ENCODE measurements at regions of chr6 and their contacts with region 1.

Region 1: DNA sequence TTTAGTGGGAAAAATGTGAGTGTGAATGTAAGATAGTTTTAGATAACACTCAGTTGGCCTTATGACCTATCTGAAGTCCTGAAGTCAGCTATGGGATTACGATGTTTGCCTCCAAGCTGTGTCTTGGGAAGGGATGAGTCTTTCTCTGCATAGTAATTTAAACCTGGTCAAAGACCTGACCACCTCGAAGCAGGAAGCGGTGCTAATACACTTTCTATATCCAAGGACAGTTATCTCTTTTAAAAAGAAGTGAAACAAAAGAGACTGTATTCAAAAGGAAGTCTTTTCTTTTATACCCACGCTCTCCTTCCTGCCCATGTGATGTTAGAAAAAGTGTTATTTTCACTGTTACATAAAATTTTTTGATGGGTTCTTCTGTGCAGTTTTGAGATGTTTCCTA is 94.9 kb downstream of the JARID2 start:
- DNase-seq: no peak
- ATAC-seq: no peak
- H3K4me3 Mint-ChIP-seq: peak overlapping the region; percentile 6
- H3K27ac Mint-ChIP-seq: peak overlapping the region; percentile 43
- H3K4me1 Mint-ChIP-seq: peaks cover 87% of the 10 kb centered on the region
- H3K27me3 Mint-ChIP-seq: no peaks in the 10 kb centered on the region
- CTCF ChIP-seq: no peak

Region 2: DNA sequence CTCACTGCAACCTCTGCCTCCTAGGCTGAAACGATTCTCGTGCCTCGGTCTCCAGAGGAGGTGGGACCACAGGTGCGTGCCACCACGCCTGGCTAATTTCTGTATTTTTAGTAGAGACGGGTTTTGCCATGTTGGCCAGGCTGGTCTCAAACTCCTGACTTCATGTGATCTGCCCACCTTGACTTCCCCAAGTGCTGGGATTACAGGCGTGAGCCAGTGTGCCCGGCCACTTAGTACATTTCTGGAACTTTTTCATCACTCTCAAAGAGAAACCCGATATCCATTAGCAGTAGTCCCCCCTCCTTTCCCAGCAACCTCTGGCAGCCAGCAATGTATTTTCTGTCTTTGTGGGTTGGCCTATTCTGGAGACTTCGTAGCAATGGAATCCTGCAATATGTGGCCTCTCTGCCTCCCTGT is 14.9 kb after region 1 on chr6:
- CTCF ChIA-PET with region 1: interaction called, 3 read pairs
- POLR2A ChIA-PET with region 1: interaction called, 5 read pairs
- intact Hi-C with region 1: loop called (anchors 2 kb)
- DNase-seq: no peak
- ATAC-seq: no peak
- H3K4me3 Mint-ChIP-seq: no peak overlapping the region
- H3K27ac Mint-ChIP-seq: no peak overlapping the region
- H3K4me1 Mint-ChIP-seq: peaks cover 79% of the 10 kb centered on the region
- H3K27me3 Mint-ChIP-seq: no peaks in the 10 kb centered on the region
- CTCF ChIP-seq: no peak

Region 3: DNA sequence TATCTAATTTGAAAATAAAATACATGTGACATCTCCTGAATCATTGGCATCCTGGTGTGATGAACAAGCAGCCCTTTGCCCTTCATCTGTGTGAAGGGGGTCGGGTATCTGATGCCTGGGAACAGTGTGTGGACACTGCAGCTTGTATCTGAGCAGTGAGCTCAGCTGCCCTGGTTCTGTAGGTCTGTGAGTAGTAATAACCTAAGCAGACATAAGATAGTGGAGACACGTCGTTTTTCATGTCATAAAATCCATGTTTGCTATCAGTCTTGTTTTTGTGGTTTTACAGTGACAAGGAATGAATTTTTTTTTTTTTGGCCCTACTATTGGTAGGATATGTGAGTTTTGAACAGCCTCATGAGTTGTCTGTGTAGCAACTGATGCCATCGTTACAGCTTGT is 38.1 kb after region 1 on chr6:
- CTCF ChIA-PET with region 1: no interaction called
- POLR2A ChIA-PET with region 1: no interaction called
- intact Hi-C with region 1: loop called (anchors 5 kb)
- DNase-seq: no peak
- ATAC-seq: no peak
- H3K4me3 Mint-ChIP-seq: no peak overlapping the region
- H3K27ac Mint-ChIP-seq: no peak overlapping the region
- H3K4me1 Mint-ChIP-seq: peaks cover 61% of the 10 kb centered on the region
- H3K27me3 Mint-ChIP-seq: no peaks in the 10 kb centered on the region
- CTCF ChIP-seq: no peak

Region 4: GRCh38 chr6:15389765-15390723 is 49.3 kb after region 1 on chr6:
- CTCF ChIA-PET with region 1: interaction called, 5 read pairs
- POLR2A ChIA-PET with region 1: no interaction called
- intact Hi-C with region 1: loop called (anchors 5 kb)
- DNase-seq: no peak
- ATAC-seq: peak; percentile 69
- H3K4me3 Mint-ChIP-seq: peak overlapping the region; percentile 42
- H3K27ac Mint-ChIP-seq: peak overlapping the region; percentile 30
- H3K4me1 Mint-ChIP-seq: peaks cover 71% of the 10 kb centered on the region
- H3K27me3 Mint-ChIP-seq: no peaks in the 10 kb centered on the region
- CTCF ChIP-seq: no peak

Measured in activated B cell treated with CpG ODN at 0.5 μM for 24 hours (primary cell).